GM12878 (cell line): ENCODE measurements at regions of chr5 and their contacts with region 1.

Region 1: DNA sequence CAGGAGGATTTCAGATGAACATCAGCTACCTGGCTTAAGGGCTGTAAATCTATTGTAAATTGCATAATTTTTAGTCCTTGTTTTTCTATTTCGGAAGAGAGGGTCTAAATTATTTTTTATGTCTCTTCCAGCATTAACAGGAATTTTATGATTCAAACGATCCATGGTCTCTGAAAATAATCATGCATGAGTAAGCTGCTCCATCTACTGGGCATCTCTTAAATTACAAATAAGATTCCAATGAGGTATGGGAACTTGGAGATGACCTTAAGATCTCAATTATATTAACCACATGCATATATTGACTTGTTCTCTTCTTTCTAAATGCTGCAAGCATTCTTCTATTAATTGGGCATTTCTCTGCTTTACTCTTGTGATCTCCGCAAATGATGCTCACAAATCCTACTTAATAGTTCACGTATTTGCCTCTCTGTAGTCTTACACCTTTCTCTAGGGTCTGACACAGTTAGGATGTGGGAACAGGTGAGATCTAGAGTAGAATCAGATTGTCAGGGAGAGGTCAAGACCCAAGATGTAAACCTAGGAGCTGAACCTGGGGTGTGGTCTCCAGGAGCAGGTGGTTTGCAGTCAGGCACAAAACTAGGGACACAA is 86.9 kb downstream of the NUDT12 start:
- DNase-seq: no peak
- ATAC-seq: peak; percentile 73
- H3K4me3 ChIP-seq: no peak overlapping the region
- H3K27ac ChIP-seq: no peak overlapping the region
- H3K4me1 ChIP-seq: no peaks in the 10 kb centered on the region
- H3K27me3 ChIP-seq: no peaks in the 10 kb centered on the region; a peak in 1 of 4 replicates
- CTCF ChIP-seq: peak; percentile 45 to 74 (median 53)
- EP300 ChIP-seq: no peak
- POLR2A ChIP-seq: no peak
- RAD21 ChIP-seq: peak; percentile 85

Region 2: GRCh38 chr5:103031607-103032006 is 444.1 kb before region 1 on chr5:
- CTCF ChIA-PET with region 1: no interaction called
- POLR2A ChIA-PET with region 1: no interaction called
- RAD21 ChIA-PET with region 1: no interaction called
- SMC1A ChIA-PET with region 1: no interaction called
- in situ Hi-C with region 1: no loop called
- intact Hi-C with region 1: loop called (anchors 10 kb)
- DNase-seq: no peak
- ATAC-seq: peak; percentile 40
- H3K4me3 ChIP-seq: no peak overlapping the region
- H3K27ac ChIP-seq: no peak overlapping the region
- H3K4me1 ChIP-seq: no peaks in the 10 kb centered on the region
- H3K27me3 ChIP-seq: no peaks in the 10 kb centered on the region
- CTCF ChIP-seq: peak in 2 of 3 experiments; percentile 12 to 24; a peak in 1 of 6 replicates
- EP300 ChIP-seq: no peak
- POLR2A ChIP-seq: no peak
- RAD21 ChIP-seq: no peak

Region 3: DNA sequence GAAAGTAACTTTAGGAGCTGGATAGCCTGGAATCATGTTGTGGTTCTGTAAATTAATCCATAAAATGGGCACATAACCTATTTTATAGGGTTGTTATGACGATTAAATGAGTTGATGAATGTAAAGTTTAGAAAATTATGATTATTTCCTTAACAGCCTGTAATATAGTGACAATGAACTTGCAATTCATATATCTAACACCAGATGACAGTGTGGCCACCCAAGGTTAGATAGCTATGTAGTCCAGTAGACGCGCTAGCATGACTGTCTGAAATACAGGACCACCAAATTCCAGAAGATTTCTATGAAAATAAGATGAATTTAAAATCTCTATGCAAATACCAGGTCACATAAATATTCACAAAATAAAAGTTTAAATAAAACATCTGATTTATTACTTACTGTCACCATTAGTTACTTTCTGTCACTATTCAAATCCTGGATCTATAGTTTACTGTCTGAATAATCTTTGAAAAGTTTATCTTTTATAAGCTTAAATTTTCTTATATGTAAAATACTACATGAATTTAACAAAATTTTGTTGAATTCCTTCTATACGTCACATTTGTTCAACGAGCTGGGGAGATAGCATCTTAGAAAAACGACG is 243.2 kb before region 1 on chr5:
- CTCF ChIA-PET with region 1: interaction called, 60 read pairs
- POLR2A ChIA-PET with region 1: no interaction called
- RAD21 ChIA-PET with region 1: interaction called, 27 read pairs
- SMC1A ChIA-PET with region 1: interaction called, 34 read pairs
- in situ Hi-C with region 1: loop called (anchors 5 kb)
- intact Hi-C with region 1: loop called (anchors 1 kb)
- DNase-seq: no peak
- ATAC-seq: peak; percentile 90
- H3K4me3 ChIP-seq: no peak overlapping the region
- H3K27ac ChIP-seq: no peak overlapping the region
- H3K4me1 ChIP-seq: no peaks in the 10 kb centered on the region
- H3K27me3 ChIP-seq: no peaks in the 10 kb centered on the region
- CTCF ChIP-seq: peak; percentile 74 to 81 (median 78)
- EP300 ChIP-seq: no peak
- POLR2A ChIP-seq: no peak
- RAD21 ChIP-seq: peak; percentile 88

Region 4: DNA sequence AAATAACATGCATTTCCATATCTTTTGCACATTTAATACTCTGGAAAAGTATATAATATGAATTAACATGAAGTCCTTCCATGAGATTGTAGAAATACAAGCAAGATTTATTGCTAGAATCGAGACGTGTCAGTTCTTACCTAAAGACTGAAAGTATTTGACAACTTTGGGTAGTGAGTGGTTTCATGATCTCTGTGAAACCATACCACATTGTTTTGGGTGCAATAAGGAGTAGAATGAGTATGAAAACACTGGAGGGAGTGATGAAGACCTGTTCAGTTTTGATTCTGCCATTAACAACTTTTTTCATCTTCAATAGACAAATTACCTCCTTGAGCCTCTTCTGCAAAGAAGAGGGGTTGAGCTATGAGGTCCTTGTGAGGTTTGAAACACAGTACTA is 46.8 kb before region 1 on chr5:
- CTCF ChIA-PET with region 1: no interaction called
- POLR2A ChIA-PET with region 1: no interaction called
- RAD21 ChIA-PET with region 1: no interaction called
- SMC1A ChIA-PET with region 1: no interaction called
- in situ Hi-C with region 1: no loop called
- intact Hi-C with region 1: no loop called
- DNase-seq: no peak
- ATAC-seq: peak; percentile 87
- H3K4me3 ChIP-seq: no peak overlapping the region
- H3K27ac ChIP-seq: no peak overlapping the region
- H3K4me1 ChIP-seq: no peaks in the 10 kb centered on the region
- H3K27me3 ChIP-seq: no peaks in the 10 kb centered on the region
- CTCF ChIP-seq: no peak
- EP300 ChIP-seq: no peak
- POLR2A ChIP-seq: no peak
- RAD21 ChIP-seq: no peak

Region 5: DNA sequence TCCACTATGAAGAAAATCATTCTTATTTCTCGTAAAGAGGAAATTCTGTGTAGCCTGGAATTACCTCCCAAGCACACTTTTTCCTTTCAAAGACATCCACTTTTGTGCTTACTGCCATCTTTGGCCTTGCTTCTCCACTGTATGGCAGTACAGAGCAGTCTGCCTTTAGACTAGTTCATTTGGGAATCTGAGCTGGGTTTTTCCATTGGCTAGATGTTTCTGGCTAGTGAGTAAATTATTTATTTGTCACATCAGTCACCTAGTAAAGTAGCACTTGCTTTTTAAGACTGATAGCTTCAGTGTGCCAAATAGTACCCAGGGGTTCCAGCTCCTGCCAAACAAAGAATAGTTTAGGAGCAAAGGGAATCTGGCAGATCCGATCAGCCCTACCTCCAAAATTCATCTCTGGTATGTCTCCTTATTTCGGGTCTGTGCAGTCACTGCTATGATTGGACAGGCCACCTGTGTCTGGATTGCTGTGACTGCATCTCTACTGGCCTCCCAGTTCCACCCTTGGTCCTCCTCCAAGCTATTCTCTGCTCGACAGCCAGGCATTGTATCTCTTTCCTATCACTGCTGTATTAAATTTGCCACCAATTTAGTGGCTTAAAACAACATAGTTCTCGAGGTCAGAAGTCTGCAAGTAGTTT is 10.8 kb before region 1 on chr5:
- CTCF ChIA-PET with region 1: interaction called, 17 read pairs
- POLR2A ChIA-PET with region 1: interaction called, 5 read pairs
- RAD21 ChIA-PET with region 1: interaction called, 9 read pairs
- SMC1A ChIA-PET with region 1: interaction called, 10 read pairs
- in situ Hi-C with region 1: no loop called
- intact Hi-C with region 1: no loop called
- DNase-seq: no peak
- ATAC-seq: no peak
- H3K4me3 ChIP-seq: no peak overlapping the region
- H3K27ac ChIP-seq: no peak overlapping the region
- H3K4me1 ChIP-seq: no peaks in the 10 kb centered on the region
- H3K27me3 ChIP-seq: no peaks in the 10 kb centered on the region
- CTCF ChIP-seq: no peak
- EP300 ChIP-seq: no peak
- POLR2A ChIP-seq: no peak
- RAD21 ChIP-seq: no peak

Region 6: DNA sequence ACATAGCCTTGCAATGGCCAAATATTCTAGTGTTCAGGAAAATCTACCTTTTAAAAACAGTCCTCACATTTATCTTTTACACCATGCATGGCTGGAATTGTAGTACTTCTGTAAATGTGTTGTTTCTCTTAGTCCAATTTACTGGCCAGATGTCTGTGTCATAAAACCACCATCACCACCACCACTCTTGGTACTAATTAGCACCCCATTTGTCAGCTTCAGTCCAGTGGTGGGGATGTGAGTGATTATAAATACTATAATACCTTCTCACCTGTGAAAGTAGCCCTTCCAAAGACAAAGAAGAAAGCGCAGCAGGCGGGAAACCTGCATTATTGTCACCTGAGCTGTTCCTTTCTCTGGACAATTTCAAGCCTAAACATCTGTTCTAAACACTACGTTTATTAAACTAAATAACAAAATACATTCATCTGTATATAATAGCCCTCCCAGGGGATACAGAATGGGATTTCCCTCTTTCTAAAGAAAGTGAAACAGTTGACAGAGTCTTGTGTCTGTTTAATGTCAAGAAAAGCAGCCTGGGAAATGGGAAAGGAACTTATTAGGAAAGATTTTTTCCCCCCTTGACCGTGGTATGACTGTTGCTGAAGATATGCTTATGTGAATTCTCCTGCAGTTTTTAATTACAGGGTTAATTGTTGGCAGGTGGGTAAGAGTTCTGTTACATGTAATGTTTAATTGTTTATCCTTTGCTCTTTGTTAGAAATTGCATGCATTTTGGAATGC is 231.4 kb after region 1 on chr5:
- CTCF ChIA-PET with region 1: no interaction called
- POLR2A ChIA-PET with region 1: no interaction called
- RAD21 ChIA-PET with region 1: no interaction called
- SMC1A ChIA-PET with region 1: no interaction called
- in situ Hi-C with region 1: no loop called
- intact Hi-C with region 1: no loop called
- DNase-seq: no peak
- ATAC-seq: peak; percentile 55
- H3K4me3 ChIP-seq: no peak overlapping the region
- H3K27ac ChIP-seq: no peak overlapping the region
- H3K4me1 ChIP-seq: no peaks in the 10 kb centered on the region
- H3K27me3 ChIP-seq: no peaks in the 10 kb centered on the region
- CTCF ChIP-seq: no peak
- EP300 ChIP-seq: no peak
- POLR2A ChIP-seq: no peak
- RAD21 ChIP-seq: no peak